ENCODE measurements at regions of chrX and their contacts with region 1.

Region 1: GRCh38 chrX:119482481-119483480 is 14.5 kb downstream of the SLC25A5 start:
- DNase-seq: no peak
- H3K4me3 ChIP-seq: peak overlapping the region; percentile 44
- CTCF ChIP-seq: peak; percentile 71

Region 2: GRCh38 chrX:119468930-119469635 is 13.7 kb before region 1 on chrX:
- CTCF ChIA-PET with region 1: interaction called, 24 read pairs
- POLR2A ChIA-PET with region 1: interaction called, 5 read pairs
- DNase-seq: no peak
- H3K4me3 ChIP-seq: peak overlapping the region; percentile 77
- CTCF ChIP-seq: peak; percentile 83

Region 3: DNA sequence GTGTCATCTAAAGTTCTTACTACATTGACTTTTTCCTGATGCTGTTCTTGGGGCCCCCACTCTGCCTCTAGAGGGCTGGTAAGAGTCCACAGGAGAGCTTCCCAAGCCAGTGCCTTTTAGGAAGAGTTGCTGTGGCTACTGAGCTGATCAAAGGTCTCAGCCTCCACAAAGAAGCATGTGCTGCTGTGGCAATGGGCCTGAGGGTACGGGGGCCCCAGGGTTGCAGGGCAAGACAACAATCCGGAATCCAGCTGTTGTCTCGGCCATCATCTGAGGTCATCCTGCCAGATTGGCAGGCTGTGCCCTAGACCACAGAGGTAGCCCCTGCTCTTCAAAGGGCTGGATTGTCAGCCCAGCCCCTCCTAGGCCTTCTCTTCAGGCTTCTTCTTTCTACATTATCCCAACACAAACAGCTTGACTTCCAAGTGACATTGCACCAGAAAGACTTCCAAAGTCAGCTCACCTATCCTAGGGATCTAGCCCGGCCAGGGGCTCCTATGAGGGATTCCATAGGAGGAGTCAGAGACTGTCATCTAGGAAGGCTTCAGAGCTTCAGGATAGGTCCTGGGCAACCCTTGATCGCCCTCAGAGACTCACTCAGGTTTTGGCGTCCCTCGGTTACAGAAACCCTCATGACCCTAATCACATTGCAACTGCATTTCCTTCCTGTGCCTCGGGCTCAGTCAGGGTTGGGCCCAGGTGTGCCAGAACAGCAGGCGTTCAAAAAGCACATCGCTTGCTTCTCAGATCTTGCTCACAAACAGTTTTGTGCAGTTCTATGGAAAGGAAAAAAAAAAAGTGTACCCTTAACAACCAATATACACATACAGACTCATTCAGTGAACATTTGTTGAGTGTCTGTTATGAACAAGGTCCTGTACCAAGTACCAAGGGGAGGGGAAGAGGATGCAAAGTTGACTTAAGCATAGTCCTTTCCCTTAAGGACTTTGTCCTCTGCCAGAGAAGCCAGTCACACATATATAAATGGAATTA is 13.2 kb after region 1 on chrX:
- CTCF ChIA-PET with region 1: interaction called, 627 read pairs
- POLR2A ChIA-PET with region 1: interaction called, 3 read pairs
- DNase-seq: no peak
- H3K4me3 ChIP-seq: no peak overlapping the region
- CTCF ChIP-seq: no peak

Region 4: DNA sequence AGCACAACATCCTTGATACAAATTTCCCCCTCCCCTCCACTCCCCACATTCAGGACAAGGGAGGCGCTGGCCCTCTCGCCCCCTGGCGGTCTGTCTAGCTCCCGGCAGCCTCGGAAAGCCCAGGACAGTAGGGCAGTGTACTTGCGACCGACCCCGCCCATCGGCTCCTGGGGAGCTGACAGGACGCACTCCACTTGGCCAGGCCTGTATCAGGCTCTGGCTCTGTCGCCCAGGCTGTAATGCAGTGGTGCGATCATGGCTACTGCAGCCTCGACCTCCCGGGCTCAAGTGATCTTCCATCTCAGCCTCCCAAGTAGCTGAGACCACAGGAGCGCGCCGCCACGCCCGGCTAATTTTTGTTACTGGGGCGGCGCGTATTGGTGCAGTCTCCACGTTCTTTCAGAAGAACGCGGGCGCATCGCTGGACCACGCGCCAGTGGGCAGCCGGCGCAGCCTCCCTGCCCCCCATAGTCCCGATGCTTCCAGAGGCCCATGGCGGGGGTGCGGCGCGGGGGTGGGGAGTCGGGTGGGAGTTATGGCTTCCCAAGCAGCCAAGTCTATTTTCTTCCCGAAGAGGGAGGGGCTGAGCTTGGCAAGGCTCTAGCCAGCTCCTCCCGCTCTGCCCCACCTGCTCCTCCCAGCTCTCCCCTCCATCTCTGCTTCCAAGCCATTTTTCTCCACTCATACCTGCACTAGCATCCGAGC is 405.1 kb after region 1 on chrX:
- CTCF ChIA-PET with region 1: no interaction called
- POLR2A ChIA-PET with region 1: no interaction called
- DNase-seq: no peak
- H3K4me3 ChIP-seq: peak overlapping the region; percentile 37
- CTCF ChIP-seq: peak; percentile 64